ENCODE measurements at regions of chr6 and their contacts with region 1.

Region 1: GRCh38 chr6:119110601-119111548 is 32.4 kb upstream of the FAM184A start:
- DNase-seq: no peak
- H3K4me3 ChIP-seq: no peak overlapping the region
- H3K27ac ChIP-seq: no peak overlapping the region
- H3K27me3 ChIP-seq: no peaks in the 10 kb centered on the region
- CTCF ChIP-seq: peak; percentile 58

Region 2: GRCh38 chr6:118930680-118931079 is 180.2 kb before region 1 on chr6:
- CTCF ChIA-PET with region 1: no interaction called
- POLR2A ChIA-PET with region 1: no interaction called
- DNase-seq: no peak
- H3K4me3 ChIP-seq: no peak overlapping the region
- H3K27ac ChIP-seq: no peak overlapping the region
- H3K27me3 ChIP-seq: no peaks in the 10 kb centered on the region
- CTCF ChIP-seq: peak; percentile 32; the same call in 1 of the 2 replicates

Region 3: DNA sequence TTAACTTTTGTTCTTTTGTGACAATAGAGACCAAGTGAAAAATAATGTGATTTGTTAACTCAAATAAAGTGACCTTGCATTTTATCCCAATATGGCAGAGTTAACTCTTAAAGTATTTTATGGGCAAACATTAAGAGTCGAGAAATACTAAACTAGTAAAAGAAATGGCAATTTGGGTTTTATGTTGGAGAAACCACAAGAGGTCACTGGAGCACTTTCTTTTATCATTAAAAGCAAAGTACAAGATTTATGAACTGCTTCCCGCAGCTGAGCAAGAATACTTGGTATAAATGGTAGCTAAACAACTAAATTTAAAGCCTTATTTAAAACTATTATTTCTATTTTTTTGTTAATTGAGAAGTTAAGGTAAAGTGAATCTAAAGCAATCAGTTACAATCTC is 142.5 kb before region 1 on chr6:
- CTCF ChIA-PET with region 1: interaction called, 219 read pairs
- POLR2A ChIA-PET with region 1: no interaction called
- DNase-seq: no peak
- H3K4me3 ChIP-seq: no peak overlapping the region
- H3K27ac ChIP-seq: no peak overlapping the region
- H3K27me3 ChIP-seq: no peaks in the 10 kb centered on the region
- CTCF ChIP-seq: peak; percentile 15

Region 4: GRCh38 chr6:118974790-118975189 is 136.1 kb before region 1 on chr6:
- CTCF ChIA-PET with region 1: interaction called, 219 read pairs
- POLR2A ChIA-PET with region 1: no interaction called
- DNase-seq: no peak
- H3K4me3 ChIP-seq: no peak overlapping the region
- H3K27ac ChIP-seq: no peak overlapping the region
- H3K27me3 ChIP-seq: no peaks in the 10 kb centered on the region
- CTCF ChIP-seq: no peak

Region 5: GRCh38 chr6:119124079-119124824 is 13.4 kb after region 1 on chr6:
- CTCF ChIA-PET with region 1: interaction called, 16 read pairs
- POLR2A ChIA-PET with region 1: no interaction called
- DNase-seq: no peak
- H3K4me3 ChIP-seq: no peak overlapping the region
- H3K27ac ChIP-seq: no peak overlapping the region
- H3K27me3 ChIP-seq: no peaks in the 10 kb centered on the region
- CTCF ChIP-seq: no peak